CD4-positive, alpha-beta T cell (primary cell): ENCODE measurements at regions of chr22 and their contacts with region 1.

Region 1: GRCh38 chr22:42437488-42438292 is 5.5 kb upstream of the NFAM1 start:
- DNase-seq: peak; percentile 74 to 90 (median 84)
- ATAC-seq: peak; percentile 97
- H3K4me3 ChIP-seq: peak overlapping the region; percentile 64
- H3K4me3 Mint-ChIP-seq: peak overlapping the region; percentile 74
- H3K27ac ChIP-seq: no peak overlapping the region
- H3K27ac Mint-ChIP-seq: no peak overlapping the region
- H3K4me1 ChIP-seq: peaks cover 11% of the 10 kb centered on the region
- H3K4me1 Mint-ChIP-seq: peaks cover 10% of the 10 kb centered on the region
- H3K27me3 ChIP-seq: peaks cover 0 to 3% of the 10 kb centered on the region in 2 experiments
- H3K27me3 Mint-ChIP-seq: no peaks in the 10 kb centered on the region
- CTCF ChIP-seq: peak; percentile 96

Region 2: DNA sequence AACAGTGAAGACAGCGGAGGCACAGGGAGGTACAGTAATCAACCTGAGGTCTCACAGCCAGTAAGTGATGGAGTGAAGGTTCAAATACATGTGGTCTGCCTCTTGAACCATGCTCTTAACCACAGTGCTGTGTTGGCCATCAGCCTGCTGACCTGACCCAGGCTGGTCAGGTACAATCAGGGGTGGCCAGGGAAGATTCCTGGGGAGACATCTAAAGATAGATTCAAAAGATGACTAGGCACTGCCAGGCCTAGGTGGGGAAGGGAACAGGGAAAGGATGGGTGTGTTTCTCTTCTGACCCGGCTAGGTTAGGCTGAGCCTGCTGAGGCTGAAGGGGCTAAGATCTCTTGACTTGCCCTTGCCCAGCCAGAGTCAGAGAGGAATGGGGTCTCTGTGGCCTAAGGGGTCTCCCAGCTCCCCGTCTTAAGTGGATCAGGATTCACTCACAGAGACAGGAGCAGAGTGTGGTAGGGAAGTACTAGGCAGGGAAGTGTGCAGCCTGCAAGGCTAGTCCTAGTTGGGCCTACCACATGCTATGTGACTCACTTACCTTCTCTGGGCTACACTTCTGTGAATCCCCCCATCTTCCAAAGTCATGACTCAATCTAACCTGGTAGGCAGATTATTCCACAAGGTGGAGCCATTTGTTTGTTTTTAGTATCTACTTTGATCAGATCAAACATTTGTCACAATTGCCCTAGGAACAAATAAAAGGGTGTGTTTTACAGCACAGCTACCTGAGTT is 615.2 kb before region 1 on chr22:
- CTCF ChIA-PET with region 1: no interaction called
- POLR2A ChIA-PET with region 1: no interaction called
- intact Hi-C with region 1: loop called in 1 of 2 experiments (anchors 5 kb)
- DNase-seq: peak in 6 of 14 experiments; percentile 6 to 87 (median 66)
- ATAC-seq: peak; percentile 92
- H3K4me3 ChIP-seq: no peak overlapping the region
- H3K4me3 Mint-ChIP-seq: no peak overlapping the region
- H3K27ac ChIP-seq: no peak overlapping the region
- H3K27ac Mint-ChIP-seq: peak overlapping the region; percentile 69
- H3K4me1 ChIP-seq: peaks cover 5% of the 10 kb centered on the region
- H3K4me1 Mint-ChIP-seq: peaks cover 18% of the 10 kb centered on the region
- H3K27me3 ChIP-seq: no peaks in the 10 kb centered on the region
- H3K27me3 Mint-ChIP-seq: no peaks in the 10 kb centered on the region
- CTCF ChIP-seq: peak; percentile 60

Region 3: DNA sequence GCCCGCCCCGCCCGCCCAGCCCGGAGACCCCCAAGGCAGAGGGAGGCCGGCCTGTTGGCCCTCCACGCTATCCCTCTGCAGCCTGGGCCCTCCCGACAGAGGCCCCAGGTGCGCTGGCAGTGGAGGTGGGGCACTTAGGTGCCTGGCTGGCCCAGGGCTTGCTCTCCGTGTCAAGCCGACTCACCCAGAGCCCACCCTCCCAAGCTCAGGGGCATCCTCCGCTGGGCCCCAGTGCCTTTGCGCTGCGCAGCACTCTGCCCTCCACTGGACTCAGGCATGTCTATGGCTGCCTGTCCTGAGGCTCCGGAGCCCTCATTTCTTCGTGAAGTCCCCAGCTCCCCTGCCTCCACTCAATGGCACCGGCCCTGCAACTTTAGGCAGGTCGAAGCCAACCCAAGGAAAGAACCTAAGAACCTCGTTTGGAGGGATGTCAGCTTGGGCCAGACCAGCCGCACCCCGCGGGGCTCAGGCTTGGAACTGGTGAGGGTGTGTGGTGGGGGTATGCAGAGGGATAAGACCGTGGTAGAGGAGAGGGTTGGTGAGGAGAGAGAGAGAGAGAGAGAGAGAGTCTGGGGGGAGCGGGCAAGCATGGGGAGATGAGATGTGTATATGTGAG is 479.6 kb before region 1 on chr22:
- CTCF ChIA-PET with region 1: no interaction called
- POLR2A ChIA-PET with region 1: no interaction called
- intact Hi-C with region 1: loop called in 1 of 2 experiments (anchors 2 kb)
- DNase-seq: no peak
- ATAC-seq: peak; percentile 39
- H3K4me3 ChIP-seq: no peak overlapping the region
- H3K4me3 Mint-ChIP-seq: no peak overlapping the region
- H3K27ac ChIP-seq: no peak overlapping the region
- H3K27ac Mint-ChIP-seq: no peak overlapping the region
- H3K4me1 ChIP-seq: peaks cover 14% of the 10 kb centered on the region
- H3K4me1 Mint-ChIP-seq: peaks cover 4% of the 10 kb centered on the region
- H3K27me3 ChIP-seq: no peaks in the 10 kb centered on the region
- H3K27me3 Mint-ChIP-seq: no peaks in the 10 kb centered on the region
- CTCF ChIP-seq: peak; percentile 60

Region 4: DNA sequence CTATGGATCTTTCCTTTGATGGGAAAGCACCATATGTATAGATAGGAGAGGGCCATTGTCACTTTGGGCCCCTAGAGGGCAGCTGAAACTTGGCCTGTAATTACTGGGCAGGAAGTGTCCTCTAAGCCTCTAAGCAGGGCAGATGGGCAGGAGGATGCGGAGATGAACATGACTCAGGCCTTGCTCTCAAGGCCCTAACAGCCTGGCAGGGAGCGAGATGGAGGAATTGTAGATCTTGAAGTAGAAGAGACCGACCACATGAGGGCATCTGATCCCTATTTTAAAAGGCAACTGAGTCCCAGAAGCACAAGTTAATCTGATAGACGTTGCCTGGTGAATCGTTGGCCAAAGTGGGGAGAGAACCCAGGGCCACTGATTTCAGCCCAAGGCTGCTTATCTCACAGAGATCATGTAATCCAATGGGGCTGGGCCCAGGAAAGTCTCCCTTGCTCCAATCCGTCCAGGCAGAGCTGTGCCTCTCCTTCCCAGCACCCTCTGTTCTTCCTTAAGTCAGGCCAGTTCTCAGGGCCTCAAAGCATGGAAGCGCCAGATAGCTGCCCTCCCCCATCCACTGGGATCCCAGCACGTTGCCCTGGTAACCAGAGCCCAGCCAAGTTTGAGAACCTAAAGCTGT is 471.0 kb before region 1 on chr22:
- CTCF ChIA-PET with region 1: no interaction called
- POLR2A ChIA-PET with region 1: no interaction called
- intact Hi-C with region 1: loop called in 1 of 2 experiments (anchors 1 kb)
- DNase-seq: peak in 7 of 14 experiments; percentile 25 to 80 (median 49)
- ATAC-seq: peak; percentile 61
- H3K4me3 ChIP-seq: no peak overlapping the region
- H3K4me3 Mint-ChIP-seq: no peak overlapping the region
- H3K27ac ChIP-seq: no peak overlapping the region
- H3K27ac Mint-ChIP-seq: no peak overlapping the region
- H3K4me1 ChIP-seq: no peaks in the 10 kb centered on the region
- H3K4me1 Mint-ChIP-seq: no peaks in the 10 kb centered on the region
- H3K27me3 ChIP-seq: peaks cover under 1 to 8% of the 10 kb centered on the region in 2 experiments
- H3K27me3 Mint-ChIP-seq: peaks cover 6% of the 10 kb centered on the region
- CTCF ChIP-seq: peak; percentile 43

Region 5: GRCh38 chr22:42169055-42169469 is 268.6 kb before region 1 on chr22:
- CTCF ChIA-PET with region 1: interaction called, 6 read pairs
- POLR2A ChIA-PET with region 1: no interaction called
- intact Hi-C with region 1: loop called (anchors 1 kb)
- DNase-seq: peak; percentile 57 to 86 (median 72)
- ATAC-seq: peak; percentile 93
- H3K4me3 ChIP-seq: no peak overlapping the region
- H3K4me3 Mint-ChIP-seq: no peak overlapping the region
- H3K27ac ChIP-seq: no peak overlapping the region
- H3K27ac Mint-ChIP-seq: no peak overlapping the region
- H3K4me1 ChIP-seq: peaks cover 13% of the 10 kb centered on the region
- H3K4me1 Mint-ChIP-seq: peaks cover 34% of the 10 kb centered on the region
- H3K27me3 ChIP-seq: no peaks in the 10 kb centered on the region
- H3K27me3 Mint-ChIP-seq: no peaks in the 10 kb centered on the region
- CTCF ChIP-seq: peak; percentile 71

Region 6: GRCh38 chr22:42277988-42278776 is 159.5 kb before region 1 on chr22:
- CTCF ChIA-PET with region 1: interaction called, 3 read pairs
- POLR2A ChIA-PET with region 1: interaction called, 5 read pairs
- intact Hi-C with region 1: loop called (anchors 1 to 5 kb)
- DNase-seq: peak in 2 of 14 experiments; percentile 34 to 44
- ATAC-seq: no peak
- H3K4me3 ChIP-seq: no peak overlapping the region
- H3K4me3 Mint-ChIP-seq: no peak overlapping the region
- H3K27ac ChIP-seq: no peak overlapping the region
- H3K27ac Mint-ChIP-seq: no peak overlapping the region
- H3K4me1 ChIP-seq: peaks cover 12% of the 10 kb centered on the region
- H3K4me1 Mint-ChIP-seq: peaks cover 4% of the 10 kb centered on the region
- H3K27me3 ChIP-seq: no peaks in the 10 kb centered on the region
- H3K27me3 Mint-ChIP-seq: no peaks in the 10 kb centered on the region
- CTCF ChIP-seq: peak; percentile 24

Region 7: DNA sequence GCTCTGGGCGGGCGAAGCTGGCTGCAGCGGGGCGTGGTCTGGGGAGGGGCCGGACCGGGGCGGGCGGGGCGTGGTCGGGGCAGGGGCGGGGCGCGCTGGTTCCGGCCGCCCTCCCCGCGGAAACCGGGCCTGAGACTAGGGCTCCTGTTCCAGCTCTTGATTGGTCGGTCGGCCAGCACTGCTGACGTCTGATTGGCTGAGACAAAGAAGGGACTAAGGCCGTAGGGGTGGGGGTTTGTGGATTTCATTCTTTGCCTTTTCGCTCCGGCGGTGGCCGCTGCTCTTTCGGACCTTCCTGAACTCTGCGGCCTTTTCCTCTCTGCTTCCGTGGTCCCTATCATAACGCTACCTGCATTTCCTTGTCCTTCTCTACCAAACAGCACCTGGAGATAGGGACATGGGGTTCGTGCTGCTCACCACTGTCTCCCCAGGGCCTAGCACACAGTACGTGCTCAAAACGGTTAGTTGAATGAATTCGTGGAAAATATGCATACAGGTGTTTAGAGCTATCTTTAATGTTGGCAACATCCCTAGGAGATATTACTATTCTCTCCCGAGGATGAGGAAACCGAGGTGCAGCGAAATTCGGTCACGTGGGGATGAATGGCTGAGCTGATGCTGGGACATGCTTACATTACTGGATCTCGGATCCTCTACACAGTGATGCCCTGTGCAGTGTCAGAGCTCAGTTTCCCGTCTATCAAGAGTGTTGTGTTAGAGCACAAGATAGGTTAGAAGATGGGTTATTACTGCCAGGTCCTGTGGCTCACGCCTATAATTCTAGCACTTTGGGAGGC is 68.2 kb before region 1 on chr22:
- CTCF ChIA-PET with region 1: no interaction called
- POLR2A ChIA-PET with region 1: no interaction called
- intact Hi-C with region 1: loop called in 1 of 2 experiments (anchors 2 kb)
- DNase-seq: peak; percentile 66 to 91 (median 78)
- ATAC-seq: peak; percentile 94
- H3K4me3 ChIP-seq: peak overlapping the region; percentile 66
- H3K4me3 Mint-ChIP-seq: peak overlapping the region; percentile 88
- H3K27ac ChIP-seq: no peak overlapping the region
- H3K27ac Mint-ChIP-seq: peak overlapping the region; percentile 27
- H3K4me1 ChIP-seq: peaks cover 24% of the 10 kb centered on the region
- H3K4me1 Mint-ChIP-seq: peaks cover 18% of the 10 kb centered on the region
- H3K27me3 ChIP-seq: peaks cover 23 to 33% of the 10 kb centered on the region in 2 experiments
- H3K27me3 Mint-ChIP-seq: peaks cover 39% of the 10 kb centered on the region
- CTCF ChIP-seq: no peak